ENCODE measurements at regions of chr19 and their contacts with region 1.

Region 1: DNA sequence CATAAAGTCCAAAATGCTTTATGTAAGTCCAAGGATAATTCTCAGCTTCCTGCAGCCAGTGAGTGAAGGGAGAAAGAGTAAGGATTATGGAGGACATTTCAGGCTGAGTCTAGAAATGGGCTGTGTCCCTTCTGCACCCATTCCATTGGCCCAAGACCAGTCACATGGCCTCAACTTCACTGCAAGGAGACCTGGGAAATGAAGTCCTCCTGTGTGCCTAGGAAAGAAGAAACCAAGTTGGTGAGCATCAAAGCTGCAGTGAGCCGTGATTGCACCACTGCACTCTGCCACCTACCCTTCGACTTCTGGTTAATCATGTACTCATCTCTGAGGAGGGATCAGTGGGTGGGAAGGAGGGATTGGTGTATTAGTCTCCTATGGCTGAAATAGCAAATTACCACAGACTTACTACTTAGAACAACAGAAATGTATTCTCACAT is 3.6 kb upstream of the CD37 start:
- DNase-seq: peak in 8 of 9 donors; percentile 48 to 76 (median 65)
- ATAC-seq: peak; percentile 83
- H3K4me3 ChIP-seq: no peak overlapping the region
- H3K4me3 Mint-ChIP-seq: peak overlapping the region in 9 of 10 donors; percentile 14 to 99 (median 49)
- H3K27ac ChIP-seq: peak overlapping the region; percentile 4
- H3K27ac Mint-ChIP-seq: peak overlapping the region; percentile 54 to 99 (median 87)
- H3K4me1 ChIP-seq: peaks cover 37 to 44% of the 10 kb centered on the region in 2 donors
- H3K4me1 Mint-ChIP-seq: peaks cover 54 to 80% (median 70%) of the 10 kb centered on the region in 7 donors
- H3K27me3 ChIP-seq: no peaks in the 10 kb centered on the region
- H3K27me3 Mint-ChIP-seq: no peaks in the 10 kb centered on the region

Region 2: GRCh38 chr19:49057636-49058234 is 273.9 kb before region 1 on chr19 and contains the start of gene CGB7:
- CTCF ChIA-PET with region 1: no interaction called
- POLR2A ChIA-PET with region 1: no interaction called
- intact Hi-C with region 1: no loop called
- DNase-seq: peak in 3 of 9 donors; percentile 18 to 57 (median 29)
- ATAC-seq: peak; percentile 15
- H3K4me3 ChIP-seq: peak within 1 kb of the TSS; percentile 62
- H3K4me3 Mint-ChIP-seq: peak within 1 kb of the TSS; percentile 67 to 99 (median 87)
- H3K27ac ChIP-seq: no peak within 1 kb of the TSS
- H3K27ac Mint-ChIP-seq: peak within 1 kb of the TSS in 1 of 9 donors; percentile 32
- H3K4me1 ChIP-seq: peaks cover 11 to 14% of the 10 kb centered on the region in 2 donors
- H3K4me1 Mint-ChIP-seq: peaks cover 16 to 19% (median 17%) of the 10 kb centered on the region in 7 donors
- H3K27me3 ChIP-seq: peaks cover 0 to 10% of the 10 kb centered on the region in 2 donors
- H3K27me3 Mint-ChIP-seq: peaks cover 16 to 63% (median 30%) of the 10 kb centered on the region in 5 donors
- total RNA-seq, gene CGB7: not detected

Region 3: GRCh38 chr19:49200238-49200862 is 131.3 kb before region 1 on chr19:
- CTCF ChIA-PET with region 1: no interaction called
- POLR2A ChIA-PET with region 1: no interaction called
- intact Hi-C with region 1: no loop called
- DNase-seq: no peak
- ATAC-seq: no peak
- H3K4me3 ChIP-seq: no peak overlapping the region
- H3K4me3 Mint-ChIP-seq: no peak overlapping the region
- H3K27ac ChIP-seq: no peak overlapping the region
- H3K27ac Mint-ChIP-seq: no peak overlapping the region
- H3K4me1 ChIP-seq: no peaks in the 10 kb centered on the region
- H3K4me1 Mint-ChIP-seq: peaks cover 0 to 9% (median 0%) of the 10 kb centered on the region in 7 donors
- H3K27me3 ChIP-seq: no peaks in the 10 kb centered on the region
- H3K27me3 Mint-ChIP-seq: peaks cover 0 to 3% (median 0%) of the 10 kb centered on the region in 5 donors

Region 4: GRCh38 chr19:49224856-49225255 is 106.8 kb before region 1 on chr19:
- CTCF ChIA-PET with region 1: interaction called, 4 read pairs
- POLR2A ChIA-PET with region 1: no interaction called
- intact Hi-C with region 1: loop called (anchors 1 kb)
- DNase-seq: peak in 3 of 9 donors; percentile 15 to 33 (median 24)
- ATAC-seq: peak; percentile 56
- H3K4me3 ChIP-seq: no peak overlapping the region
- H3K4me3 Mint-ChIP-seq: no peak overlapping the region
- H3K27ac ChIP-seq: no peak overlapping the region
- H3K27ac Mint-ChIP-seq: no peak overlapping the region
- H3K4me1 ChIP-seq: peaks cover 4 to 9% of the 10 kb centered on the region in 2 donors
- H3K4me1 Mint-ChIP-seq: peaks cover 5 to 7% (median 6%) of the 10 kb centered on the region in 7 donors
- H3K27me3 ChIP-seq: no peaks in the 10 kb centered on the region
- H3K27me3 Mint-ChIP-seq: peaks cover 2 to 6% (median 4%) of the 10 kb centered on the region in 5 donors

Region 5: DNA sequence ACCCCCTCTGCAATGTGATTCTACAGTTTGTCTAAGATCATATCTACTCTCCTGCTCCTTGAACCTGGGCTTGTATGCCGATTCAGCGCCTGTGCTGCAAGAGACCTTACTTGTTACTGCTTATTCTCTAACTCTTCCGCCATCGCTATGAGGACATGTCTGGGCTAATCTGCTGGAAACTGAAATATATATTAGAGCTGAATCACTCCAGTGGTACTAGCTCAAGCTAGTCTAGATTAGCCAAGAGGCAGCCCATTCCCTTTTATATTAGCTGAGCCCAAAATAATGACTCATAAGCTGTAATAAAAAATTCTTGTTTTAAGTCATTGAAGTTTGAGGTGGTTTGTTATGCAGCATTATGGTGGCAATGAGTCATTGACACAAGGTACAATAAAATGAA is 59.5 kb before region 1 on chr19:
- CTCF ChIA-PET with region 1: interaction called, 3 read pairs
- POLR2A ChIA-PET with region 1: no interaction called
- intact Hi-C with region 1: loop called (anchors 2 to 10 kb)
- DNase-seq: no peak
- ATAC-seq: no peak
- H3K4me3 ChIP-seq: no peak overlapping the region
- H3K4me3 Mint-ChIP-seq: no peak overlapping the region
- H3K27ac ChIP-seq: no peak overlapping the region
- H3K27ac Mint-ChIP-seq: no peak overlapping the region
- H3K4me1 ChIP-seq: no peaks in the 10 kb centered on the region
- H3K4me1 Mint-ChIP-seq: peaks cover 0 to 2% (median 0%) of the 10 kb centered on the region in 7 donors
- H3K27me3 ChIP-seq: no peaks in the 10 kb centered on the region
- H3K27me3 Mint-ChIP-seq: peaks cover 0 to 26% (median 15%) of the 10 kb centered on the region in 5 donors

Region 6: GRCh38 chr19:49363268-49364082 is 31.8 kb after region 1 on chr19 and contains the start of gene DKKL1:
- CTCF ChIA-PET with region 1: no interaction called
- POLR2A ChIA-PET with region 1: interaction called, 3 read pairs
- intact Hi-C with region 1: loop called (anchors 1 kb)
- DNase-seq: peak; percentile 33 to 84 (median 62)
- ATAC-seq: peak; percentile 93
- H3K4me3 ChIP-seq: peak within 1 kb of the TSS; percentile 47
- H3K4me3 Mint-ChIP-seq: peak within 1 kb of the TSS in 1 of 10 donors; percentile 45
- H3K27ac ChIP-seq: no peak within 1 kb of the TSS
- H3K27ac Mint-ChIP-seq: peak within 1 kb of the TSS in 1 of 9 donors; percentile 70
- H3K4me1 ChIP-seq: peaks cover 11 to 28% of the 10 kb centered on the region in 2 donors
- H3K4me1 Mint-ChIP-seq: peaks cover 5 to 21% (median 12%) of the 10 kb centered on the region in 7 donors
- H3K27me3 ChIP-seq: peaks cover 5 to 18% of the 10 kb centered on the region in 2 donors
- H3K27me3 Mint-ChIP-seq: peaks cover 0 to 36% (median 16%) of the 10 kb centered on the region in 5 donors
- total RNA-seq, gene DKKL1: not detected

Region 7: GRCh38 chr19:49869441-49870176 is 538.0 kb after region 1 on chr19:
- CTCF ChIA-PET with region 1: no interaction called
- POLR2A ChIA-PET with region 1: interaction called, 4 read pairs
- intact Hi-C with region 1: loop called in 1 of 2 experiments (anchors 10 kb)
- DNase-seq: peak; percentile 83 to 94 (median 87)
- ATAC-seq: peak; percentile 87
- H3K4me3 ChIP-seq: peak overlapping the region; percentile 58
- H3K4me3 Mint-ChIP-seq: peak overlapping the region in 2 of 10 donors; percentile 87
- H3K27ac ChIP-seq: peak overlapping the region; percentile 72
- H3K27ac Mint-ChIP-seq: peak overlapping the region in 5 of 9 donors; percentile 59 to 87 (median 74)
- H3K4me1 ChIP-seq: peaks cover 31 to 38% of the 10 kb centered on the region in 2 donors
- H3K4me1 Mint-ChIP-seq: peaks cover 25 to 51% (median 45%) of the 10 kb centered on the region in 7 donors
- H3K27me3 ChIP-seq: no peaks in the 10 kb centered on the region
- H3K27me3 Mint-ChIP-seq: no peaks in the 10 kb centered on the region

Measured in naive thymus-derived CD4-positive, alpha-beta T cell (primary cell).